ENCODE measurements at regions of chr22 and their contacts with region 1.

Region 1: GRCh38 chr22:22414266-22414665 is 94.3 kb downstream of the ZNF280B start:
- DNase-seq: no peak
- H3K4me3 ChIP-seq: no peak overlapping the region
- H3K27ac ChIP-seq: no peak overlapping the region
- H3K27me3 ChIP-seq: peaks cover 22% of the 10 kb centered on the region
- CTCF ChIP-seq: no peak

Region 2: GRCh38 chr22:22431271-22432220 is 17.3 kb after region 1 on chr22:
- CTCF ChIA-PET with region 1: interaction called, 11 read pairs
- POLR2A ChIA-PET with region 1: no interaction called
- DNase-seq: peak; percentile 6
- H3K4me3 ChIP-seq: no peak overlapping the region
- H3K27ac ChIP-seq: no peak overlapping the region
- H3K27me3 ChIP-seq: peaks cover 17% of the 10 kb centered on the region
- CTCF ChIP-seq: peak; percentile 72

Region 3: DNA sequence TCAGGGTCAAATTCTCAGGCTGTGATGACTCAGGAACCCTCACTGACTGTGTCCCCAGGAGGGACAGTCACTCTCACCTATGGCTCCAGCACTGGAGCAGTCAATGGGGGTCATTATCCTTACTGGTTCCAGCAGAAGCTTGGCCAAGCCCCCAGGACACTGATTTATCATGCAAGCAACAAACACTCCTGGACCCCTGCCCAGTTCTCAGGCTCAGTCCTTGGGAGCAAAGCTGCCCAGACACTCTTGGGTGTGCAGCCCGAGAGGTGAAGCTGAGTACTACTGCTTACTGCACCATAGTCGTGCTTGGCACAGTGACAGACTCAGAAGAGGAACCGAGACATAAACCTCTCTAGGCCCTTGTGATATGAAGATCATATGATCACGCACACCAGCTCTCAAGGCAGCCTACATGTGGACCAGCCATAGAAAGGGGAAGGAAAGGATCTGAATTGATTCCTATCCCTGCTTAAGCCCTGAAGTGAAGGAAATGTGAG is 36.1 kb after region 1 on chr22:
- CTCF ChIA-PET with region 1: no interaction called
- POLR2A ChIA-PET with region 1: no interaction called
- DNase-seq: no peak
- H3K4me3 ChIP-seq: no peak overlapping the region
- H3K27ac ChIP-seq: no peak overlapping the region
- H3K27me3 ChIP-seq: peaks cover 12% of the 10 kb centered on the region
- CTCF ChIP-seq: no peak